PC-3 (cell line): ENCODE measurements at regions of chr1 and their contacts with region 1.

Region 1: GRCh38 chr1:179954493-179955297 is at the start of gene CEP350:
- DNase-seq: peak; percentile 97
- ATAC-seq: peak; percentile 92
- H3K4me3 ChIP-seq: peak within 1 kb of the TSS; percentile 92
- H3K27ac ChIP-seq: peak within 1 kb of the TSS; percentile 57
- H3K4me1 ChIP-seq: peaks cover 10% of the 10 kb centered on the region; the same call in 1 of the 2 replicates
- H3K27me3 ChIP-seq: no peaks in the 10 kb centered on the region
- CTCF ChIP-seq: no peak
- total RNA-seq, gene CEP350: 17.1 and 17.8 TPM in 2 replicates

Region 2: GRCh38 chr1:179867807-179868330 is 86.8 kb before region 1 on chr1:
- CTCF ChIA-PET with region 1: no interaction called
- POLR2A ChIA-PET with region 1: no interaction called
- intact Hi-C with region 1: loop called (anchors 5 kb)
- DNase-seq: peak; percentile 53
- ATAC-seq: peak; percentile 81
- H3K4me3 ChIP-seq: no peak overlapping the region
- H3K27ac ChIP-seq: no peak overlapping the region
- H3K4me1 ChIP-seq: no peaks in the 10 kb centered on the region
- H3K27me3 ChIP-seq: no peaks in the 10 kb centered on the region
- CTCF ChIP-seq: peak; percentile 83

Region 3: DNA sequence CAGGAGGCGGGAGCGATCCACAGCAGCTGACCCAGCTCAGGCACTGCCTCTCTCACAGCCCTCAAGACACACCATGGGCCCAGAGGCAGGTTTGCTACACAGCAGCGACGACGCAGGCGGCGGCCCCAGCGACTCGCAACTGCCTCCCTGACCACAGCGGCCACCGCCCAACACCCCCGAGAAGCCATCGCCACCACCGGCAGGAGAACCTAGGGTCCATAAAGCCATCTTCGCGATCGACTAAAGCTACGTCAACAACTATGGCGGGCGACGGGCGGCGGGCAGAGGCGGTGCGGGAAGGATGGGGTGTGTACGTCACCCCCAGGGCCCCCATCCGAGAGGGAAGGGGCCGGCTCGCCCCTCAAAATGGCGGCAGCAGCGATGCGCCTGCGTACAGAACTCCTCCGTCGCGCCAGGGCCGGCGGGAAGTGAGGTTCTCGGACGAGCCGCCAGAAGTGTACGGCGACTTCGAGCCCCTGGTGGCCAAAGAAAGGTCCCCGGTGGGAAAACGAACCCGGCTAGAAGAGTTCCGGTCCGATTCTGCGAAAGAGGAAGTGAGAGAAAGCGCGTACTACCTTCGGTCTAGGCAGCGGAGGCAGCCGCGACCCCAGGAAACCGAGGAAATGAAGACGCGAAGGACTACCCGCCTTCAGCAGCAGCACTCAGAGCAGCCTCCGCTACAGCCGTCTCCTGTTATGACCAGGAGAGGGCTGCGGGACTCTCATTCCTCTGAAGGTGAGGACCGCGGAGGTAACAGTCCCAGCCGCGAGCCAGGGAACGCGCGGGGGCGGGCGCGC is 72.3 kb before region 1 on chr1 and contains the start of gene TOR1AIP1:
- CTCF ChIA-PET with region 1: no interaction called
- POLR2A ChIA-PET with region 1: no interaction called
- intact Hi-C with region 1: loop called (anchors 2 kb)
- DNase-seq: peak; percentile 93
- ATAC-seq: peak; percentile 75
- H3K4me3 ChIP-seq: peak within 1 kb of the TSS; percentile 99
- H3K27ac ChIP-seq: peak within 1 kb of the TSS; percentile 96
- H3K4me1 ChIP-seq: peaks cover 11% of the 10 kb centered on the region; the same call in 1 of the 2 replicates
- H3K27me3 ChIP-seq: no peaks in the 10 kb centered on the region
- CTCF ChIP-seq: no peak
- total RNA-seq, gene TOR1AIP1: 14.8 and 21.3 TPM in 2 replicates

Region 4: DNA sequence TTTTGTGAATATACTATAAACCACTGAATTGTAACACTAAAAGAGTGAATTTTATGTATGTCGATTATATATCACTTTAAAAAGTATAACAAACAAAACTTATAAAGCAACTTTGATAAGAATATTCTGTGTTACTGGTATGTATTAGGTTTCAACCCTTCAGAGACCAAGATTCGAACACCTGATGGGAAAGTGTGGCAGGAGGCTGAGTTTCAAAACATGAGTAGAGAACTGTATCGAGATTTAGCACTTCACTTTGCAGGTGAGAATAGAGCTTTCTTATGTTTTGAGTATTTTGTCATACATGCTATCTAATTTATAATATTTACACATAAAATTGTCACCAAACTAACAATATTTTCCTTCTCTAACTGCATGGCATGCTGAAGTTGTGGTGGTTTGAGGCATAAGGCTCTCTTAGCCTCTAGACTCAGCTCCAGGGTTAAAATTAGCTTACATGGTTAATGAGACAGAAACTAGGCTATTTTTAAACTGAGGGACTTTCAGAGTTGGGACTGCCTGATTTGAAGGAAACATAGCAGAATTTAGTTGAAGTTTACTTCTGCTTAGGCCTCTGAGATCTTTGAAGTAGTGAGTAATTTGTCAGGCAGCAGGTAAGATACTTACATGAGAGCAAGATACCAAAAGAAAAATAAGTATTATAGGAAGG is 48.5 kb after region 1 on chr1:
- CTCF ChIA-PET with region 1: no interaction called
- POLR2A ChIA-PET with region 1: no interaction called
- intact Hi-C with region 1: no loop called
- DNase-seq: no peak
- ATAC-seq: no peak
- H3K4me3 ChIP-seq: no peak overlapping the region
- H3K27ac ChIP-seq: no peak overlapping the region
- H3K4me1 ChIP-seq: no peaks in the 10 kb centered on the region
- H3K27me3 ChIP-seq: no peaks in the 10 kb centered on the region
- CTCF ChIP-seq: no peak

Region 5: DNA sequence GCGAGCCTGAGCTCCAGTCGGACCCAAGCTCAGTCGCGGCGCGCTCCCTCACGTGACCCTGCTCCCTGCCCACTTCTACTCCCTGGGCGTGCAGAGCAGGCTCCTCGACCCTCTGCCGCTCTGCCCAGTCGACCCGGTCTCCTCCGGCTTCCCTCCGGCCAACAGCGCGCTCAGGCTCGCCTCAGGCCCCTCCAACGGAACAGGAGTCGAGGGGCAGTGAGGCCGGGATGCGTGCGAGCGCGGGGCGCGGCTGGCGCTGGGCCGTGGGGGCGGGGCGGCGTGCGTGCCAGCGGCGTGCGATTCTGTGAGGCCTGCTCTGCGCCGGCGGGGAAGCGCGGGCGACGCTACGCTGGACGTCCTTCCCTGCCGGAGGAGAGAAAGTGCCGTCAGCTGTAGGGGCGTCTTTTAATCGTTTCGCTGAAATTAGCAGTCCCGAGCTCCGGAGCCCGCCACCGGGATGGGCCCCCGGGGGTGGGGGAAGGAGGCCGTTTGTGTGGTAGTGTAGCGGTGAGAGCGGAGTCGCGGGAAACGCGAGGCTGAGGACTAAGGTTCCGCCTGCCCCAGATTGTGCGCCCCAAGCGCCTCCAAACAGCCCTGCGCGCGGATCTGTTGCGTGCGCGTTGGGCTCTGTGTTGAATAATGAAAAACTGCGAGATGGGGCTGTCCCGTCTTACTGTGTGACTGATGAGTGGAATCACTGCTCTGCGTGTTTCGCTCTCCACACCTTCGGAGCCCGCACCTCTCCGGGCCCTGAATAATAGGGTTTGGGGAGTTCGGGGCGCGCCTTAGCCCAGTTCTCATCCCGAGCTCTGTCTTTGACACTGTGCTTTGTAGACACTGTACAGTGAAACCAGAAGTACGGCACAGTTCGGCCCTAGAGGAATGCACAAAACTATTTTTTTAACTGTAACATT is 547.9 kb after region 1 on chr1 and contains the start of gene ACBD6:
- CTCF ChIA-PET with region 1: no interaction called
- POLR2A ChIA-PET with region 1: no interaction called
- intact Hi-C with region 1: no loop called
- DNase-seq: peak; percentile 78
- ATAC-seq: peak; percentile 90
- H3K4me3 ChIP-seq: peak within 1 kb of the TSS; percentile 95
- H3K27ac ChIP-seq: peak within 1 kb of the TSS; percentile 94
- H3K4me1 ChIP-seq: peaks cover 19% of the 10 kb centered on the region
- H3K27me3 ChIP-seq: no peaks in the 10 kb centered on the region
- CTCF ChIP-seq: no peak
- total RNA-seq, gene ACBD6: 43.3 and 69.6 TPM in 2 replicates